ENCODE measurements at regions of chr22 and their contacts with region 1.

Region 1: DNA sequence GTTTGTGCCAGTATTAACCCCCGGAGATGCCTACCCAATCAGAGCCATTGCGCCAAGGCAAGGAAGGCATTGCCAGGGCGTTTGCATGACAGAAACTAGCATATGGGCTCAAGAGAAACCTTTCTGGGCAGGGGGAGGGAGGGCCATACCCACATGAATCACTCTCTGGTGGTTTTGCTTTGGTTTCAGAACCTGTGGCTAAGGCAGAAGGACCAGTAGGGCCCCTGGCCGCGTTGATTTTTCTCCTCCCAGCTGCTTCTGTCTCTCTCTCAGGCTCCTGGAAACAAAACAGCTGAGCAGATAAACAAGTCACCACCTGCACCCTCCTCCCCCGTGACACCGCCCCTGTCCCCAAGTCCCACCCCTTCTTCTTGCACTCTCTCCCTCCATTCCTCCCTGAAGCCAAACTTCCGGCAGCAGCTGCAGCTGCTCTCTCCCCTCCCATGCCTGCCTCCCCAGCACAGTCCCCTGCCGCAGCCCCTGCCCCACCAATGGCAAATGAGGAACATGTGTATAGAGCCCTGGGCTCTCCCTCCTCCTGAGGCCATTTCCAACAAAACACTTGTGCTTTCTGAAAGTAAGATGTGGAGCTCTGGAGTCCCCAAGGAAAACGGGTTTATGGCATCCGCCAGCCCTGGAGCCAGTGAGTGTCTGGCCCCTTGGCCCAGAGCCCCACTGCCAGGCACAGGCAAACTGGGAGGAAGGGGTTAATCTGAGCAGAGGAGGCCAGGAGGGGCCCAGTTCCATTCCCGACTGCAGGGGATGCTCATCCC is 39.0 kb upstream of the ADA2 start:
- DNase-seq: peak; percentile 60
- ATAC-seq: peak; percentile 92
- H3K4me3 Mint-ChIP-seq: peak overlapping the region; percentile 65
- H3K27ac Mint-ChIP-seq: peak overlapping the region; percentile 97
- H3K4me1 Mint-ChIP-seq: peaks cover 30% of the 10 kb centered on the region
- H3K27me3 Mint-ChIP-seq: no peaks in the 10 kb centered on the region
- CTCF ChIP-seq: no peak

Region 2: DNA sequence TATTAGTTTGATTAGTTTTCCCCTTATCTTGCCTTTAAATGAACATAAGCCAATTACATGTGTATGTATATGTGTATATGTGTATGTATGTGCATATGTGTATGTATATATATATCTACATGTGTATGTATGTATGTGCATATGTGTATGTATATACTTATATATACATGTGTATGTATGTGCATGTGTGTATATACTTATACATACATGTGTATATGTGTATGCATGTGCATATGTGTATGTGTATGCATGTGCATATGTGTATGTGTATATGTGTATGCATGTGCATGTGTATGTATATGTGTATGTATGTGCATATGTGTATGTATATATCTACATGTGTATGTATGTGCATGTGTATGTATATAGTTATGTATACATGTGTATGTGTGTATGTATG is 600.1 kb before region 1 on chr22:
- CTCF ChIA-PET with region 1: no interaction called
- POLR2A ChIA-PET with region 1: no interaction called
- intact Hi-C with region 1: no loop called
- DNase-seq: no peak
- ATAC-seq: no peak
- H3K4me3 Mint-ChIP-seq: no peak overlapping the region
- H3K27ac Mint-ChIP-seq: no peak overlapping the region
- H3K4me1 Mint-ChIP-seq: no peaks in the 10 kb centered on the region
- H3K27me3 Mint-ChIP-seq: no peaks in the 10 kb centered on the region
- CTCF ChIP-seq: no peak

Region 3: GRCh38 chr22:17237038-17237668 is 21.0 kb before region 1 on chr22:
- CTCF ChIA-PET with region 1: no interaction called
- POLR2A ChIA-PET with region 1: interaction called, 31 read pairs
- intact Hi-C with region 1: loop called (anchors 1 kb)
- DNase-seq: no peak
- ATAC-seq: peak; percentile 93
- H3K4me3 Mint-ChIP-seq: peak overlapping the region; percentile 84
- H3K27ac Mint-ChIP-seq: peak overlapping the region; percentile 88
- H3K4me1 Mint-ChIP-seq: peaks cover 21% of the 10 kb centered on the region
- H3K27me3 Mint-ChIP-seq: no peaks in the 10 kb centered on the region
- CTCF ChIP-seq: no peak

Region 4: GRCh38 chr22:17243524-17243923 is 14.7 kb before region 1 on chr22:
- CTCF ChIA-PET with region 1: no interaction called
- POLR2A ChIA-PET with region 1: interaction called, 31 read pairs
- intact Hi-C with region 1: loop called (anchors 1 kb)
- DNase-seq: peak; percentile 44
- ATAC-seq: peak; percentile 97
- H3K4me3 Mint-ChIP-seq: peak overlapping the region; percentile 55
- H3K27ac Mint-ChIP-seq: peak overlapping the region; percentile 89
- H3K4me1 Mint-ChIP-seq: peaks cover 28% of the 10 kb centered on the region
- H3K27me3 Mint-ChIP-seq: no peaks in the 10 kb centered on the region
- CTCF ChIP-seq: no peak

Region 5: GRCh38 chr22:17281440-17281841 is 23.2 kb after region 1 on chr22:
- CTCF ChIA-PET with region 1: no interaction called
- POLR2A ChIA-PET with region 1: interaction called, 3 read pairs
- intact Hi-C with region 1: loop called (anchors 2 kb)
- DNase-seq: no peak
- ATAC-seq: peak; percentile 46
- H3K4me3 Mint-ChIP-seq: peak overlapping the region; percentile 47
- H3K27ac Mint-ChIP-seq: peak overlapping the region; percentile 59
- H3K4me1 Mint-ChIP-seq: peaks cover 23% of the 10 kb centered on the region
- H3K27me3 Mint-ChIP-seq: peaks cover 2% of the 10 kb centered on the region
- CTCF ChIP-seq: no peak

Region 6: GRCh38 chr22:17303840-17304779 is 45.9 kb after region 1 on chr22:
- CTCF ChIA-PET with region 1: no interaction called
- POLR2A ChIA-PET with region 1: interaction called, 3 read pairs
- intact Hi-C with region 1: loop called (anchors 2 kb)
- DNase-seq: peak; percentile 37
- ATAC-seq: peak; percentile 96
- H3K4me3 Mint-ChIP-seq: peak overlapping the region; percentile 59
- H3K27ac Mint-ChIP-seq: peak overlapping the region; percentile 91
- H3K4me1 Mint-ChIP-seq: peaks cover 40% of the 10 kb centered on the region
- H3K27me3 Mint-ChIP-seq: no peaks in the 10 kb centered on the region
- CTCF ChIP-seq: no peak

Region 7: DNA sequence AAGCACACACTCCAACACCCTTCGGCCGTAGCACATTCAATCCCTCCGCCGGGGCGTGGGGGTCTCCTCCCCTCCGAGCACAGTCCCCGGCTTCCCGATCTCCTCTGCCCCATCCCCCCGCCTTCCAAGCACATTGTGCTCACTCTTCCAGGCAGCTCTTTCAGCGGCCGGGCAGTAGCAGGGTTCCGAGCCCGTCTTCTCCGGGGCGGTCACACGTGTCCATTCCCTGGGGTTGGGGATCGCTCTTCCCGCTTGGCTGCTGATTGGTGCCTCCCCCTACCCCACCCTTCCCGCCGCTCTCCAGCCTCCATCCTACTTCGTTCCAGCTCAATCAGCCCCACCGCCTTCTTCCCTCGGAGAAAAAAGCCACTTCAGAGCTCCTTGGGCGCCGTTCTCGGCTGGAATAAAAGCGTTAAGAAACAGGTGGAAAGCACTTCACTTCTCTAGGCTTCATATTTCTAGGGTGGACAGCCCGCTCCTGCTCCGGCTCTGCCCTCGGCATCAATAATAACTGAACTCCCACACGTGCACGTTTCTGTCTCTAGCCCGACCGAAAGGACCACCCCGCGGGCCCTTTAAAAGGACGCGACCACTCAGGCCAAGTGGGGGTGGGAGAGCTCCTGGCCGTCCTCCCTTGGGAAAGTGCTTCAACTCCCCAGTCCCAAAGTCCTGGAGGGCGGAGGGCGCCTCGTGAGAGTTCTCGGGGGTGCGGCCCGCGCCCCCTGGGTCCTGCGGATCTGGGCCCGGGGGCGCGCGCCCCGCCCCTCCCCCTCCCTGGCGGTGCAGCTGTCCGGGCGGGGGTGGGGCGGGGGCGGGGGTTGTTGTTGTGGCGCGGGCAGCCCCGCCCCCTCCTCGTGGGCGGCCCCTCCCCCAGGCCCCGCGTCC is 110.6 kb after region 1 on chr22:
- CTCF ChIA-PET with region 1: interaction called, 3 read pairs
- POLR2A ChIA-PET with region 1: interaction called, 6 read pairs
- intact Hi-C with region 1: loop called (anchors 5 kb)
- DNase-seq: peak; percentile 44
- ATAC-seq: peak; percentile 56
- H3K4me3 Mint-ChIP-seq: peak overlapping the region; percentile 80
- H3K27ac Mint-ChIP-seq: peak overlapping the region; percentile 10
- H3K4me1 Mint-ChIP-seq: peaks cover 27% of the 10 kb centered on the region
- H3K27me3 Mint-ChIP-seq: peaks cover 39% of the 10 kb centered on the region
- CTCF ChIP-seq: no peak

Measured in activated B cell treated with CpG ODN at 0.5 μM for 24 hours (primary cell).